Activated T-helper 1 cell treated with anti-CD3 and anti-CD28 coated beads, Interleukin-12 subunit alpha, Interleukin-12 subunit beta, Interleukin-2, Interleukin-4 antibody, amounts not matched to agents 30 ng/mL and 10 ng/mL and 1 ng/mL, durations not matched to agents 14 hours and 24 hours and 36 hours (primary cell): ENCODE measurements at regions of chr17 and their contacts with region 1.

Region 1: DNA sequence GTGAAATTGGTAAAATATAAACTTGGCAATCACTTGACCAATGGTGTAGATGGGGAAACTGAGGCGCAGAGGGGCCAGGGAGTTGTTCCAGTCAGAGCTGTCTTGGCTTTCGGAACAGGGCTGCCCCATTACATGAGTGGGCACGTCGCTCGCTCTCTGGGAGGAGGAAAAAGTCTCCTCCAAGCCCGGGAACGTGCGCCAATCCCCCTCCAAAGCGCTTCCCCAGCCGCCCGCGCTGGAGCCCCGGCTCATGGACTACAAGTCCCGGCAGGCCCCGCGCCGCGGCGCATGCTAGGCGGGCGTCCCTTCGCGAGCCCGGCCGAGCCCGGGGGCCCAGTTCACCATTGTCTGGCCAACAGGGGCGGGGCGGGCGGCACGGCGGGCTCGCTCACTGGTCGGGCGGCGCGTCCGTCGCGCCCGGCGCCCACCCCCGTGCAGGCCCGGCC is 291 bp upstream of the LLGL1 start:
- DNase-seq: peak; percentile 95
- H3K4me3 Mint-ChIP-seq: peak overlapping the region; percentile 70
- H3K27ac Mint-ChIP-seq: peak overlapping the region; percentile 48
- H3K4me1 Mint-ChIP-seq: peaks cover 20% of the 10 kb centered on the region
- H3K27me3 Mint-ChIP-seq: peaks cover 2% of the 10 kb centered on the region

Region 2: DNA sequence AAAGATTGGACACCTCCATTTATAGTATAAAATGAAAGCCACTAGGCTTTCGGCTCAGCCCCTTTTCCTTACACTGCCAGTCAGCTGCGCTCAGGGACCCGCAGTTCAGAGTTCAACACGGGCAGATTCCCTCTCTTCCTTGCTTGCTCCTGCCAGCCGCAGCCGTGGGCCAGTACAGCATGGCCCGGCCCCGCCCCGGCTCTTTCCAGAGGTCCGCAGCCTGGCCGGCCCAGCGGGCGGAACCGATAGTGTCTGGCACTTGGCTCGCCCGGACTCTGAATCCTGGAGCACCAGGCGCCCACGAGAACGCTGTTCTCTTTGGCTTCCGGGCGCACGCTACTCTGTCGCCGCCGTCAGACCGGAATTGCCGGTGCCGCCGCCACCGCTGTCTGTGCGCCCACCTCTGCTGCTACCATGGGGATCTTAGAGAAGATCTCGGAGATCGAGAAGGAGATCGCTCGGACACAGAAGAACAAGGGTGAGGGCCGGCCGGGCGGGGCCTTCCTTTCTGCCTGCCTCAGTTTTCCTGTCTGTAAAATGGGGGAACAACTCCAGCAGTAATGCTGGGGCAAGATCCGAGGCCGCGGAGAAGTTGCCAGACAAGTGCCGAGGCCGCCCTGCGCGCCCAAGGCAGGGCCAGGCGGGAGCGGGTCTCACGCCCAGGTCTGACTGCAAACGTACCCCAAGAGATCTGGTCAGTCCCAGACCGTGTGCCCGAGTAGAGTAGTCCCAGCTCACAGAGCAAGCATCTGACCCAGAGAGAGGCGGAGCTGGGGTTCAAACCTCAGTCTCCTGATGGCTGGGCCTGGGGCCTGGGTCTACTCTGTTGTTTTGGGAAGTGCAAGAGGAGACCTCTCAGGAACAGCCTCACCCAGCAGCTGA is 137.3 kb before region 1 on chr17 and contains the start of gene DRG2:
- intact Hi-C with region 1: loop called (anchors 5 kb)
- DNase-seq: peak; percentile 84
- H3K4me3 Mint-ChIP-seq: peak within 1 kb of the TSS; percentile 95
- H3K27ac Mint-ChIP-seq: peak within 1 kb of the TSS; percentile 96
- H3K4me1 Mint-ChIP-seq: peaks cover 17% of the 10 kb centered on the region
- H3K27me3 Mint-ChIP-seq: no peaks in the 10 kb centered on the region
- total RNA-seq, gene DRG2: 67.5 and 69.2 TPM in 2 replicates

Region 3: GRCh38 chr17:18141210-18141803 is 83.8 kb before region 1 on chr17:
- intact Hi-C with region 1: loop called (anchors 2 kb)
- DNase-seq: peak; percentile 11
- H3K4me3 Mint-ChIP-seq: no peak overlapping the region
- H3K27ac Mint-ChIP-seq: no peak overlapping the region
- H3K4me1 Mint-ChIP-seq: peaks cover 5% of the 10 kb centered on the region
- H3K27me3 Mint-ChIP-seq: peaks cover 4% of the 10 kb centered on the region

Region 4: DNA sequence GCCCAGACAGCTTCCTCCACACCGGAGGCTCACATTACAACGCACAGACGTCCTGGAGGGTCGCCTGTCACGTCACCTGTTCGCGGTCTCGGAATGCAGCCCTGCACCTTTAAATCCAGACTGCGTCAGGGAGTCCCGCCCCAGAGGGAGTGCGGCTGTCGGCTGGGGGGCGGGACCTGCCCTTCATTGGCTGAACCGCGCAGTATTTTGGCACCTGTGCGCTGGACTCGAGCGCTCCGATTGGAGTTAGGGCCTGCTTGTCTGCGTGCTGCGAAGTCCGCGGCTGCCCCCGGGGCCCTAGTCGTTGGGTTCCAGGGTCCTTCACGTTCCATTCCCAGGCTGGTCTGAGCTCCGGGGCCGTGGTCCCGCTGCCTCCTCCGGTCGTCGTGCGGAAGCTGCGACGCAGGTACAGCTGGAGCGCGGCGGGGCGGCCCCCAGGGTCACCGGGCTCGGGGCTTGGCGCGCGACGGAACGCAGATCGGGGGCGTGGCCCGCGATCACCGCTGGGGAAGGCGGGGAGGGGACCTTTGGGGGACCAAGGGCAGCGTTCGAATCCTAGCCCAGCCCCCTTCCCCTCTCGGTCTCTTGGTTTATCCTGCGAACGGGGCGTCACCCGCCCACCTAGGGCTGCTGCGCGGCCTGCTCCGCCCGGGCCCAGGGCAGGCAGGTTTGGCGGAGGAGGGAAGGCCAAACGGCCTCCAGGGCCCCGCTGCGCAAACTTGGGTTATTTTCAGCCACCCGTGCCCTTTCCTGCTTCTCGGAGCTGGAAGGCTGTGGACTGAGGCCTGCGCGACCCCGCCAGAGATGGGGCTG is 35.4 kb after region 1 on chr17 and contains the start of gene MIEF2:
- intact Hi-C with region 1: loop called (anchors 1 kb)
- DNase-seq: peak; percentile 91
- H3K4me3 Mint-ChIP-seq: peak within 1 kb of the TSS; percentile 82
- H3K27ac Mint-ChIP-seq: peak within 1 kb of the TSS; percentile 76
- H3K4me1 Mint-ChIP-seq: peaks cover 31% of the 10 kb centered on the region
- H3K27me3 Mint-ChIP-seq: no peaks in the 10 kb centered on the region
- total RNA-seq, gene MIEF2: 5.8 and 7.0 TPM in 2 replicates

Region 5: GRCh38 chr17:18314731-18315561 is 89.8 kb after region 1 on chr17 and contains the starts of genes SMCR8 and TOP3A:
- intact Hi-C with region 1: loop called (anchors 1 kb)
- DNase-seq: peak; percentile 95
- H3K4me3 Mint-ChIP-seq: peak within 1 kb of the TSS; percentile 93
- H3K27ac Mint-ChIP-seq: peak within 1 kb of the TSS; percentile 100
- H3K4me1 Mint-ChIP-seq: peaks cover 75% of the 10 kb centered on the region
- H3K27me3 Mint-ChIP-seq: peaks cover 2% of the 10 kb centered on the region
- total RNA-seq, gene SMCR8: 18.7 and 19.2 TPM in 2 replicates
- total RNA-seq, gene TOP3A: 75.2 and 87.2 TPM in 2 replicates

Region 6: GRCh38 chr17:18363101-18364049 is 138.2 kb after region 1 on chr17 and contains the start of gene SHMT1:
- intact Hi-C with region 1: loop called (anchors 2 kb)
- DNase-seq: peak; percentile 93
- H3K4me3 Mint-ChIP-seq: peak within 1 kb of the TSS; percentile 93
- H3K27ac Mint-ChIP-seq: peak within 1 kb of the TSS; percentile 88
- H3K4me1 Mint-ChIP-seq: peaks cover 9% of the 10 kb centered on the region
- H3K27me3 Mint-ChIP-seq: no peaks in the 10 kb centered on the region
- total RNA-seq, gene SHMT1: 51.5 and 56.2 TPM in 2 replicates